A673 (cell line): ENCODE measurements at regions of chr12 and their contacts with region 1.

Region 1: GRCh38 chr12:121888478-121889266 is at the start of gene PSMD9:
- DNase-seq: peak; percentile 98
- H3K4me3 ChIP-seq: peak within 1 kb of the TSS; percentile 87
- H3K27ac ChIP-seq: peak within 1 kb of the TSS; percentile 94
- H3K4me1 ChIP-seq: peaks cover 14% of the 10 kb centered on the region
- H3K27me3 ChIP-seq: no peaks in the 10 kb centered on the region
- CTCF ChIP-seq: peak; percentile 63
- total RNA-seq, gene PSMD9: 78.3 and 86.4 TPM in 2 replicates

Region 2: GRCh38 chr12:121214855-121215745 is 673.6 kb before region 1 on chr12:
- CTCF ChIA-PET with region 1: no interaction called
- POLR2A ChIA-PET with region 1: no interaction called
- intact Hi-C with region 1: no loop called
- DNase-seq: no peak
- H3K4me3 ChIP-seq: no peak overlapping the region
- H3K27ac ChIP-seq: no peak overlapping the region
- H3K4me1 ChIP-seq: no peaks in the 10 kb centered on the region
- H3K27me3 ChIP-seq: no peaks in the 10 kb centered on the region
- CTCF ChIP-seq: no peak

Region 3: DNA sequence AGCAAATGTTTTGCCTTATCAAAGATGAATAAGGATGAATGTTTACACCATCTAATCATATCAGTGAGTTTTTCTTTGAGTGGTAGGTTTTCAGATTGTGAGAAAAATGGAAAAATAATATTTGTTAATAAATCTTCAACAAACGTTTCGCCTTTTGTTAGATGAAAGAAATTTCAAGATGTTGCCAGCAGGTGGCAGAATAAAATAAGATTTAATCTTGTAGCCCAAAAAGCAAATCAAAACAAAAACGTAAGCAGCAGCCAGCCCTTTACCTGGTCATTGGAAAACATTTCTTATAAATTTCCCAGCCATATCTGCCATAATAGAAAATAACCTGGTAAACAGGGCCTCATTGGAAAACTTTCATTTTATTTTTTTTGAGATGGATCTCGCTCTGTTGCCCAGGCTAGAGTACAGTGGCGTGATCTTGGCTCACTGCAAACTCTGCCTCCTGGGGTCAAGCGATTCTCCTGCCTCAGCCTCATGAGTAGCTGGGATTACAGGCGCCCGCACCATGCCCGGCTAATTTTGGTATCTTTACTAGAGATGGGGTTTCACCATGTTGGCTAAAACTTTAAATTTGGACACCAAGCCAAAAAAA is 191.5 kb before region 1 on chr12:
- CTCF ChIA-PET with region 1: no interaction called
- POLR2A ChIA-PET with region 1: no interaction called
- intact Hi-C with region 1: loop called (anchors 5 kb)
- DNase-seq: peak; percentile 72
- H3K4me3 ChIP-seq: no peak overlapping the region
- H3K27ac ChIP-seq: no peak overlapping the region
- H3K4me1 ChIP-seq: no peaks in the 10 kb centered on the region
- H3K27me3 ChIP-seq: no peaks in the 10 kb centered on the region
- CTCF ChIP-seq: peak; percentile 66

Region 4: DNA sequence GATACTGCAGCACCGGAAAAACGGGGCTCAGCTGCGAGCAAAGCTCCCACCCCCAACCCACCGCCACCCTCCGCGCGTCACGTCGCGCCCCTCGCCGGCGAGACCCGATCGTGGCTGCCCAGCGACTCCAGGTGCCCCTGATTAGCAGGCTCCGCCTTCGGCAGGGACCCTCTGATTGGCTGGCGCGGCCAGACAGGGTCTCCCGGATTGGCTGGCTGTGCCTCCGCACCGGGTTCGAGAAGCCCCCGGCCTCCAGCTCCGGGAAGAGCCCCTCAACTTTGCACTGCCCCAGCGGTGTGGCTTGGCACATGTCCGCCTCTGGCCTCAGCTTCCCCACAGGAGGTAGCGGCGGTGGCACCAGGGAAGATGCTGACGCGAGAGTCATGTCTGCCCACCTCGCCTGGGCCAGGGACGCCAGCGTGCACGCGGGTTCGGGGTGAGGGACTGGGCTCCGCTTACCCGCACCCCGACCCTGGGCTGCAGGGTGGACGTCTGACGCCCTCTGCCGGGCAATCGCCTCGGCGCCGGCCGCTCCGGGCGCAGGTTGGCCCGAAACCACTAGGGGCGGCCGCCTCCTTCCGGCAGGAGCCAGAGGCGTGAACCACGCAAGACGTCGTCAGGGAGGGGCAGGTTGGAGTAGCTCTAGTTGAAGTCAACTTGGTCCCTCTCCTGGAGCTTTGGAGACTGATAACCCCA is 94.7 kb before region 1 on chr12:
- CTCF ChIA-PET with region 1: interaction called, 10 read pairs
- POLR2A ChIA-PET with region 1: interaction called, 5 read pairs
- intact Hi-C with region 1: loop called (anchors 2 kb)
- DNase-seq: peak; percentile 94
- H3K4me3 ChIP-seq: peak overlapping the region; percentile 58
- H3K27ac ChIP-seq: peak overlapping the region; percentile 83
- H3K4me1 ChIP-seq: peaks cover 32% of the 10 kb centered on the region
- H3K27me3 ChIP-seq: no peaks in the 10 kb centered on the region
- CTCF ChIP-seq: peak; percentile 100

Region 5: GRCh38 chr12:121839106-121839992 is 49.3 kb before region 1 on chr12:
- CTCF ChIA-PET with region 1: interaction called, 11 read pairs
- POLR2A ChIA-PET with region 1: no interaction called
- intact Hi-C with region 1: loop called (anchors 2 kb)
- DNase-seq: peak; percentile 98
- H3K4me3 ChIP-seq: peak overlapping the region; percentile 58
- H3K27ac ChIP-seq: peak overlapping the region; percentile 68
- H3K4me1 ChIP-seq: peaks cover 5% of the 10 kb centered on the region
- H3K27me3 ChIP-seq: no peaks in the 10 kb centered on the region
- CTCF ChIP-seq: peak; percentile 52

Region 6: DNA sequence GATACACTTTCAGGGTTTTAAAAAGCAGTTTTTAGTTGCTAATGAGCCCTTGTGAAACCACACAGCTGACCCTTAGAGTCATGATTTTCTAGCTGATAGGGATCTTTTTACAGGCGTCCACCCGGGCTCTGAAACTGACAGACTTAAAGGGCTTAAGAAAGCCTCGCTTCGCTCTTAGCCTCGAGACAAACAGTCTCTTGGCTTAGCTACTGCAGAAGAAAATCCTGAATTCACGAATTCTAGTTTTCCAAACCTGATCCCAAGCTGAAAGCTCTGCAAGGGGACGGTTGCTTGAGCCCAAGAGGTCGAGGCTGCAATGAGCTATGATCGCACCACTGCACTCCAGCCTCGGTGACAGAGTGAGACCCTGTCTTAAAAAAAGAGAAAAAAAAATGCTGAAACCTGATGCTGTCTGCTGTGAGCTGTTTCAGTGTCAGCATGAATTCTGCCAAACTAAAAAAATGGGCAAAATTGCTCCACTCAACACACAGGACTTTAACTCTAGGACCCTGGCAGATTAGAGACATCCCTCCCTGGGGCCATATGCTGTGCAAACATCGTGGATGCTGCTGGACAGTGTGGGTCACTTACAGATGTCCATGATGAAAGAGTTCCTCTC is 26.9 kb before region 1 on chr12:
- CTCF ChIA-PET with region 1: interaction called, 3 read pairs
- POLR2A ChIA-PET with region 1: interaction called, 10 read pairs
- intact Hi-C with region 1: no loop called
- DNase-seq: no peak
- H3K4me3 ChIP-seq: no peak overlapping the region
- H3K27ac ChIP-seq: no peak overlapping the region
- H3K4me1 ChIP-seq: no peaks in the 10 kb centered on the region
- H3K27me3 ChIP-seq: no peaks in the 10 kb centered on the region
- CTCF ChIP-seq: no peak

Region 7: GRCh38 chr12:121917979-121918678 is 29.5 kb after region 1 on chr12 and contains the start of gene CFAP251:
- CTCF ChIA-PET with region 1: interaction called, 3 read pairs
- POLR2A ChIA-PET with region 1: interaction called, 15 read pairs
- intact Hi-C with region 1: no loop called
- DNase-seq: peak; percentile 98
- H3K4me3 ChIP-seq: peak within 1 kb of the TSS; percentile 56
- H3K27ac ChIP-seq: peak within 1 kb of the TSS; percentile 81
- H3K4me1 ChIP-seq: peaks cover 37% of the 10 kb centered on the region
- H3K27me3 ChIP-seq: no peaks in the 10 kb centered on the region
- CTCF ChIP-seq: peak; percentile 72
- total RNA-seq, gene CFAP251: 5.5 and 7.5 TPM in 2 replicates

Region 8: DNA sequence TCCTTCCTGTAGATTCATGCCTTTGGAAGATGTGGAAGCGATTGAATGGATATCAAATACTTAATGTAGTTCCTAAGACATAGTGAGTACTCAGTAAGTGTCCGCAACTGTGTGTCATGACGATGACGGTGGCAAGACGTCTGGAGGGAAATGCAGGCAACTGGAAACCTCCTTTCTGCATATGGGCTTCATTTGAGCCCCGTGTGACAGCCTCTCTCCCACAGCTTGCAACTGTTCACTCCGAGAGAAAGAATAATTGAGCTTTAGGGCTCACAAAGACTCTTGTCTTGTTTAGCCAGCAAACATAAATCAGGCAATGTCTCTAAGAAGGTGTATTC is 36.7 kb after region 1 on chr12:
- CTCF ChIA-PET with region 1: no interaction called
- POLR2A ChIA-PET with region 1: interaction called, 16 read pairs
- intact Hi-C with region 1: no loop called
- DNase-seq: peak; percentile 63
- H3K4me3 ChIP-seq: no peak overlapping the region
- H3K27ac ChIP-seq: peak overlapping the region; percentile 88
- H3K4me1 ChIP-seq: peaks cover 29% of the 10 kb centered on the region
- H3K27me3 ChIP-seq: no peaks in the 10 kb centered on the region
- CTCF ChIP-seq: no peak

Region 9: GRCh38 chr12:123171967-123172366 is 1283.3 kb after region 1 on chr12:
- CTCF ChIA-PET with region 1: no interaction called
- POLR2A ChIA-PET with region 1: no interaction called
- intact Hi-C with region 1: no loop called
- DNase-seq: no peak
- H3K4me3 ChIP-seq: no peak overlapping the region
- H3K27ac ChIP-seq: no peak overlapping the region
- H3K4me1 ChIP-seq: no peaks in the 10 kb centered on the region
- H3K27me3 ChIP-seq: no peaks in the 10 kb centered on the region
- CTCF ChIP-seq: no peak